Ovary (tissue), 10 donors: ENCODE measurements at regions of chr14 and their contacts with region 1.

Region 1: DNA sequence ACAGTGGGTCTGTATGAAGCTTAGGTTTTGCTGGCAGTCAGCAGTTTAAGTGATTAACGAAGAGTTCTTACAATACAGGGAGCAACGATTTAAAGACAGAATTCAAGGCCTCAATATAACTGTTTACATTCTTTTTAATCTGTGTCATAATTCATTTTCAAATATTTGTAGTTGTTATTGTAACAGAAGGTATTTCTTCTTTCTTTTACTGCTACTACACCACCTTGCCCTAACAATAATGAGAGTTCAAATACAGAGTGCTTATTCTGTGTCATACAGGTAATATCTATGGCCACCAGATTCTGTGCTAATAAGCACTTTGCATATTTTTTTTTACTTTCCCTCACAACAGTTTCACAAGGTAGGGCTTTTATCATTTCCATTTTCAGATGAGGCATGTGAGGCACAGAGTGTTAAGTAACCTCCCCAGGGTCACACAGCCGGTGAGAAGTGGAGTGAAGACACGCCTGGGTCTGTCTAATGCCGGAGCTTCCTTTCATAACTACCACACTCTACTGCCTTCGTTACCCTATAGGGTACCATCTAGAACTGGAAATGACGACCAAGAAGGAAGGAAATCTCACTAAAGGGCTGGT is 81.9 kb downstream of the PELI2 start:
- DNase-seq: no peak
- H3K4me3 ChIP-seq: no peak overlapping the region
- H3K27ac ChIP-seq: peak overlapping the region; percentile 63 to 79
- H3K4me1 ChIP-seq: peaks cover 28% of the 10 kb centered on the region
- H3K27me3 ChIP-seq: no peaks in the 10 kb centered on the region
- CTCF ChIP-seq: no peak
- EP300 ChIP-seq: no peak
- POLR2A ChIP-seq: no peak

Region 2: DNA sequence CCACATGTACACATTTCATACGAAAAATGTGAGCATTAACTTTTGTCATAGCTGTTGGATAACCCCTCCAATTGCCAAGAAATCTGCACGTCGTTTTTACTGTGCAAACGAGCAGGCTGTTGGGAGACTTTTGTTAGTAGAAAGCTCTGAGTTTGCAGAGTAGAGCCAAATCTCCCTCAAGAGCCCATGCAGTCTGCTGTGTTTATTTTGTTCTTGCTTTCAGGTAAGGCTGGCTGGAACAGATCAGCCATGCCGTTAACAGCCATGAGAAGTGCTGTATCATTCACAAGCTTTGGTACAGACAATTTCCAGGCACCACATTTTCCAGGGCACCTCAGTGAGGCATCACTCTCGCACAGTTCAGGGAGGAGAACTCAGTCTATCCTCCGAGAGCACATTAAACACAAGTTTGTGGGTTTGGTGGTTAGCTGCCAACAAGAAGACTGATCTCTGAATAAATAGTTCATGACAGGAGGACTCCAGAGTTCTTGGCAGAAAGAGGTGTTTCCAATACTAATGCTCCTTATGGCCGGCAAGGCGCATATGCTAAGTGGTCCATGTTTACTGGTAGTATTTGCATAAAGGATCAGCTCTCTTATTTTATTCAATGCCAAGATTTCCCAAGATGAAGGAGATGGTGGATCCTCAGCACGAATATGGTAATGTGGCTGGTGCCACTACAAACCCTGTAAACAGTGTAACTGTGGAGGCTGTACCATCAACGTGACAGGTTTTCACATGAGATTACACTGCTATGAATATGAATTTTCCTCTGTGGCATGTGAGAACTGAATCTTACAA is 112.2 kb before region 1 on chr14:
- intact Hi-C with region 1: no loop called
- DNase-seq: no peak
- H3K4me3 ChIP-seq: no peak overlapping the region
- H3K27ac ChIP-seq: no peak overlapping the region
- H3K4me1 ChIP-seq: no peaks in the 10 kb centered on the region
- H3K27me3 ChIP-seq: no peaks in the 10 kb centered on the region
- CTCF ChIP-seq: no peak
- EP300 ChIP-seq: no peak
- POLR2A ChIP-seq: no peak

Region 3: DNA sequence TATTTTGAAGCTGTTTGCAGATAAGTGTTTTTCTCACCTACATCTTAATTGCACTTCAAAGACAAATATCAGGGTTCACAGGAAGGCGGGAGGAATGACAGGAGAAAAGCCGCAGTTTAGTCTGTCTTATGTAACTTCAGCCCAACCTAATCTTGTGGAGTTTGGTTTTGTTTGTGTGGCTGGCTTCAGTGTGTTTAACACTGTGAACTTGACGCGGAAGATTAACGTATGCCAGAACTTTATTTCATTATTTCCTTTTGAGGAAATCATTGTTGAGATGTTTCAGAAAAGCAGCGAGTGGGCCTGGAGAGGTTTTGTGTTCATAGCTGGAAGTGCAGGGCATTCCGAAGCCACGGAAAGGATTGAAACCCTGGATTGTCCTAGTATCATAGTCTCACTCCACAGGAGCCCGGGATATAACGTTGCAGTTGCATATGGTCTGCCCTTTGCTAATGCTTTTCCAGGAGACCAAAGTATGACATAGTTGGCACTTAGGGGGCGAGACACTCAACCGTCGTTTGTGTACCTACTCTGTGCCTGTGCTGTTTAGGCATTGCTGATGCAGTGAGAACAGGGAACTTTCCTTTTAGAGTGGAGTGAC is 79.9 kb before region 1 on chr14:
- intact Hi-C with region 1: loop called in 1 of 4 experiments (anchors 10 kb)
- DNase-seq: peak in 1 of 5 donors; percentile 28
- H3K4me3 ChIP-seq: peak overlapping the region; percentile 54
- H3K27ac ChIP-seq: peak overlapping the region; percentile 82 to 98
- H3K4me1 ChIP-seq: peaks cover 9% of the 10 kb centered on the region
- H3K27me3 ChIP-seq: no peaks in the 10 kb centered on the region
- CTCF ChIP-seq: peak in 1 of 3 donors; percentile 7
- EP300 ChIP-seq: no peak
- POLR2A ChIP-seq: no peak